T-cell (primary cell): ENCODE measurements at regions of chr11 and their contacts with region 1.

Region 1: GRCh38 chr11:134050541-134051383 is 18.1 kb upstream of the JAM3 start:
- DNase-seq: peak; percentile 46 to 86 (median 67)
- ATAC-seq: peak; percentile 92 to 95 (median 93)
- H3K4me3 ChIP-seq: no peak overlapping the region
- H3K4me3 Mint-ChIP-seq: peak overlapping the region in 2 of 3 donors; percentile 13
- H3K27ac ChIP-seq: no peak overlapping the region
- H3K27ac Mint-ChIP-seq: no peak overlapping the region
- H3K4me1 ChIP-seq: peaks cover 3 to 10% of the 10 kb centered on the region in 2 experiments
- H3K4me1 Mint-ChIP-seq: peaks cover 3 to 14% (median 8%) of the 10 kb centered on the region in 3 donors
- H3K27me3 ChIP-seq: peaks cover 0 to 57% of the 10 kb centered on the region in 2 experiments
- H3K27me3 Mint-ChIP-seq: peaks cover 6 to 29% of the 10 kb centered on the region in 2 donors

Region 2: GRCh38 chr11:134004496-134005172 is 46.1 kb before region 1 on chr11:
- CTCF ChIA-PET with region 1: no interaction called
- POLR2A ChIA-PET with region 1: no interaction called
- DNase-seq: no peak
- ATAC-seq: no peak
- H3K4me3 ChIP-seq: no peak overlapping the region
- H3K4me3 Mint-ChIP-seq: no peak overlapping the region
- H3K27ac ChIP-seq: no peak overlapping the region
- H3K27ac Mint-ChIP-seq: no peak overlapping the region
- H3K4me1 ChIP-seq: no peaks in the 10 kb centered on the region
- H3K4me1 Mint-ChIP-seq: no peaks in the 10 kb centered on the region
- H3K27me3 ChIP-seq: peaks cover 5 to 24% of the 10 kb centered on the region in 2 experiments
- H3K27me3 Mint-ChIP-seq: peaks cover 4 to 8% of the 10 kb centered on the region in 2 donors

Region 3: GRCh38 chr11:134068829-134069425 is 18.2 kb after region 1 on chr11 and contains the start of gene JAM3:
- CTCF ChIA-PET with region 1: interaction called, 3 to 12 read pairs
- POLR2A ChIA-PET with region 1: interaction called in 1 of 2 experiments, 4 read pairs
- DNase-seq: peak; percentile 89 to 99 (median 95)
- ATAC-seq: peak; percentile 90 to 95 (median 93)
- H3K4me3 ChIP-seq: peak within 1 kb of the TSS; percentile 40 to 47
- H3K4me3 Mint-ChIP-seq: peak within 1 kb of the TSS; percentile 86 to 91 (median 89)
- H3K27ac ChIP-seq: no peak within 1 kb of the TSS
- H3K27ac Mint-ChIP-seq: peak within 1 kb of the TSS; percentile 87 to 90
- H3K4me1 ChIP-seq: peaks cover 0 to 12% of the 10 kb centered on the region in 2 experiments
- H3K4me1 Mint-ChIP-seq: peaks cover 13 to 20% (median 15%) of the 10 kb centered on the region in 3 donors
- H3K27me3 ChIP-seq: peaks cover 0 to 15% of the 10 kb centered on the region in 2 experiments
- H3K27me3 Mint-ChIP-seq: peaks cover 0 to 7% of the 10 kb centered on the region in 2 donors
- total RNA-seq, gene JAM3: 6.6 to 10.7 (median 8.2) TPM

Region 4: DNA sequence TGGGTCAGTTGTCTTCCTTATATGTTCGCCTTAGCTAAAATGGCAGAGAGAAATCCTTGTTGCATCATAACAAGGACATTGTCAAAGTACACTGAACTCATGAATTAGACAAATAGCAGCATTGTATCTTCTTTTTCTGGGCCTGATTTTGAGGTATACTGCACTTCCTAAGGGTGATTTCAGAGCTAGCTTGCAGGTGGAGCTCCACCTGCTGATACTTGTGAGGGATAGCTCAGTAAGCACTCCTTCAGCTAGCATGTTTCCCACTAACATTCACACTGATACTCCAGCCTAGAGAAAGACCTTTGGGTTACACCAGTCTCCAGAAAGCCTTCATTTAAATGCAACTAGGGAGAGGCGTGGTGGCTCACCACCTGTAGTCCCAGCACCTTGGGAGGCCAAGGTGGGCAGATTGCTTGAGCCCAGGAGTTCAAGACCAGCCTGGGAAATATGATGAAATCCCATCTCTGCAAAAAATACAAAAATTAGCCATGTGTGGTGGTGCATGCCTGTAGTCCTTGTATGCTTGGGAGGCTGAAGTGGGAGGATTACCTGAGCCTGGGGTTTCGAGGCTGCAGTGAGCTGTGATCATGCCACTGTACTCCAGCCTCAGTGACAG is 47.9 kb after region 1 on chr11:
- CTCF ChIA-PET with region 1: interaction called, 3 to 18 read pairs
- POLR2A ChIA-PET with region 1: no interaction called
- DNase-seq: peak in 1 of 35 experiments; percentile 30
- ATAC-seq: peak in 2 of 4 experiments; percentile 36 to 60
- H3K4me3 ChIP-seq: no peak overlapping the region
- H3K4me3 Mint-ChIP-seq: no peak overlapping the region
- H3K27ac ChIP-seq: no peak overlapping the region
- H3K27ac Mint-ChIP-seq: no peak overlapping the region
- H3K4me1 ChIP-seq: no peaks in the 10 kb centered on the region
- H3K4me1 Mint-ChIP-seq: peaks cover 0 to 5% (median 3%) of the 10 kb centered on the region in 3 donors
- H3K27me3 ChIP-seq: no peaks in the 10 kb centered on the region
- H3K27me3 Mint-ChIP-seq: no peaks in the 10 kb centered on the region